Common myeloid progenitor, CD34-positive (primary cell): ENCODE measurements at regions of chr11 and their contacts with region 1.

Region 1: GRCh38 chr11:95705485-95706124 is 84.0 kb downstream of the FAM76B start:
- DNase-seq: peak; percentile 88 to 92 (median 90)
- H3K4me3 ChIP-seq: peak overlapping the region in 3 of 7 experiments; percentile 20 to 26 (median 25)
- H3K27ac ChIP-seq: no peak overlapping the region
- H3K4me1 ChIP-seq: peaks cover 5 to 44% (median 20%) of the 10 kb centered on the region in 4 experiments
- H3K27me3 ChIP-seq: no peaks in the 10 kb centered on the region

Region 2: GRCh38 chr11:95715777-95716241 is 10.2 kb after region 1 on chr11:
- CTCF ChIA-PET with region 1: interaction called, 16 read pairs
- POLR2A ChIA-PET with region 1: no interaction called
- DNase-seq: peak; percentile 80 to 97 (median 95)
- H3K4me3 ChIP-seq: peak overlapping the region in 1 of 7 experiments; percentile 12
- H3K27ac ChIP-seq: peak overlapping the region; percentile 18 to 69
- H3K4me1 ChIP-seq: peaks cover 12 to 44% (median 34%) of the 10 kb centered on the region in 4 experiments
- H3K27me3 ChIP-seq: no peaks in the 10 kb centered on the region

Region 3: GRCh38 chr11:95727620-95728019 is 22.0 kb after region 1 on chr11:
- CTCF ChIA-PET with region 1: interaction called, 23 read pairs
- POLR2A ChIA-PET with region 1: no interaction called
- DNase-seq: no peak
- H3K4me3 ChIP-seq: no peak overlapping the region
- H3K27ac ChIP-seq: no peak overlapping the region
- H3K4me1 ChIP-seq: peaks cover 0 to 17% (median 5%) of the 10 kb centered on the region in 4 experiments
- H3K27me3 ChIP-seq: no peaks in the 10 kb centered on the region

Region 4: GRCh38 chr11:95764267-95764898 is 58.8 kb after region 1 on chr11:
- CTCF ChIA-PET with region 1: interaction called, 16 read pairs
- POLR2A ChIA-PET with region 1: no interaction called
- DNase-seq: peak; percentile 65 to 87 (median 84)
- H3K4me3 ChIP-seq: no peak overlapping the region
- H3K27ac ChIP-seq: no peak overlapping the region
- H3K4me1 ChIP-seq: peaks cover 4 to 17% (median 11%) of the 10 kb centered on the region in 4 experiments
- H3K27me3 ChIP-seq: no peaks in the 10 kb centered on the region